ENCODE measurements at regions of chr9 and their contacts with region 1.

Region 1: GRCh38 chr9:73183917-73184861 is 32.5 kb downstream of the ANXA1 start:
- DNase-seq: no peak
- H3K4me3 ChIP-seq: no peak overlapping the region
- H3K27ac ChIP-seq: no peak overlapping the region
- H3K4me1 ChIP-seq: no peaks in the 10 kb centered on the region
- H3K27me3 ChIP-seq: no peaks in the 10 kb centered on the region
- CTCF ChIP-seq: peak in 2 of 3 experiments; percentile 14 to 64
- POLR2A ChIP-seq: no peak

Region 2: DNA sequence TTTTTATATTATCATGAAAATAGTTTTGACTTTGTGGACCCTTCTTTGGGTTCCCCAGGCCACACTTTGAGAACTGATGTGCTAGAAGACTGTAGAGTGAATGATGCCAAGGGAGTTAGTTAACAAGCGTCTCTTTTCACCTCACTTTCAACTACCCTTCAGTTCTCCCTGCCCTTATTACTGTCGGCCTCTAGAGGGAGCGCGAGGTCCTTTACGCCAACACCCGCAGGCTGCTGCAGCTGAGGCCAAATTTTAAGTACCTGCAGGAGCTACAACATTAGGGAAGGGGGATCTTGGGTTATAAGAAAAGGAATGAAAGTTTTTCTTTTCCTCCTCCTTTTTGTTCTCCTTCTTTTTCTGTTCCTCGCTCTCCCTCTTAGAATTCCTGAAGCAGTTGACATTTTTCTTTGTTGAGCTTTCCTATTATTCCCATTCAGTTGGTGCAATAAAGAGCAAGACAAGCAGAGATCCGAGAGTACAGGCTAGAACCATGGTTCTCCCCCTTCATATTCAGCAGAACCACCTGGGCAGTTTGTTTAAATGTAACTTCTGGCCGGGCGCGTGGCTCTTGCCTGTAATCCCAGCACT is 903.2 kb before region 1 on chr9:
- intact Hi-C with region 1: loop called (anchors 10 kb)
- DNase-seq: peak; percentile 86
- H3K4me3 ChIP-seq: peak overlapping the region in 1 of 2 donors; percentile 14
- H3K27ac ChIP-seq: no peak overlapping the region
- H3K4me1 ChIP-seq: peaks cover 2% of the 10 kb centered on the region
- H3K27me3 ChIP-seq: no peaks in the 10 kb centered on the region
- CTCF ChIP-seq: peak; percentile 77 to 86 (median 80)
- POLR2A ChIP-seq: no peak

Region 3: GRCh38 chr9:72912476-72913381 is 271.5 kb before region 1 on chr9:
- intact Hi-C with region 1: no loop called
- DNase-seq: no peak
- H3K4me3 ChIP-seq: no peak overlapping the region
- H3K27ac ChIP-seq: peak overlapping the region; percentile 81 to 88
- H3K4me1 ChIP-seq: peaks cover 22% of the 10 kb centered on the region
- H3K27me3 ChIP-seq: no peaks in the 10 kb centered on the region
- CTCF ChIP-seq: no peak
- POLR2A ChIP-seq: no peak

Region 4: DNA sequence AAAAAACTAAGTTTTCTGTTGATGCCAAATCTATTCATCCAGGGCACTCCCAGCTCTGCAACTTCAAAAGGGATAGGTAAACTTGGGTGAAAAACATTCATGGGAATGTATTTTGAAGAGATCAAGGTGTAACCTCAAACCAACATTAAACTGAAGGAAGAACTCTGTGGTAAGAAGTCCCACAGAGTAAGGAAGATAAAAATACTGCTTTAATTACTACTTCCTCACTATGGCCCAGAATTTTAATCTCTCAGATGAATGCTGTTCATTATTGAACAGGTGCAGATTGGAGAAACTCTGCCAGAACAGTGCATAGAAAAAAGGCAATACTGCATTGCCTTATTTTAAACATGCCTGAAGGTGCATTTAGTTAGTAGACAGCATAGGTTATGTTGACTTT is 70.1 kb before region 1 on chr9:
- intact Hi-C with region 1: loop called (anchors 2 kb)
- DNase-seq: no peak
- H3K4me3 ChIP-seq: no peak overlapping the region
- H3K27ac ChIP-seq: no peak overlapping the region
- H3K4me1 ChIP-seq: no peaks in the 10 kb centered on the region
- H3K27me3 ChIP-seq: no peaks in the 10 kb centered on the region
- CTCF ChIP-seq: no peak
- POLR2A ChIP-seq: no peak